Natural killer cell (primary cell): ENCODE measurements at regions of chr3 and their contacts with region 1.

Region 1: GRCh38 chr3:161310649-161311423 is 60.5 kb downstream of the SPTSSB start:
- DNase-seq: peak; percentile 54 to 81
- ATAC-seq: peak; percentile 75 to 84 (median 80)
- H3K4me3 ChIP-seq: no peak overlapping the region
- H3K4me3 Mint-ChIP-seq: peak overlapping the region; percentile 84
- H3K27ac ChIP-seq: peak overlapping the region; percentile 54
- H3K27ac Mint-ChIP-seq: peak overlapping the region; percentile 64 to 78
- H3K4me1 ChIP-seq: peaks cover 44% of the 10 kb centered on the region
- H3K4me1 Mint-ChIP-seq: peaks cover 50 to 51% of the 10 kb centered on the region in 2 donors
- H3K27me3 ChIP-seq: peaks cover 2% of the 10 kb centered on the region
- H3K27me3 Mint-ChIP-seq: peaks cover 34 to 41% of the 10 kb centered on the region in 2 donors
- CTCF ChIP-seq: no peak

Region 2: DNA sequence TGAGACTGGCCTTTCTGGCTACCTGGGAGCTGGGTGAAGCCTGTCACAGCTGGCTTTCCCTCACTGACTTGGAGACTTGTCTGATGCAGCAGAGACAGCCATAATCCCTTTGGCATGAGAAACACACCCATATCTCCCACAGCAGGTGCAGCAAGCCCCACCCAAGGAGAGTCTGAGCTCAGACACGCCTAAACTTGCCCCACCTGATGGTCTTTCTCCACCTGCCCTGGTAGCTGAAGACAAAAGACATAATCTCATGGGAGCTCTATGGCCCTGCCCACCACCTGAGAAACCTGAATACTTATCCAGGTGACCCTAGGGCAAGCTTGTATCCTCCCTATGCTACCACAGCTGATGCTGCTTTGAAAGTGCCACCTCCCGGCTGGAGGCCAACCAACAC is 34.9 kb before region 1 on chr3:
- intact Hi-C with region 1: no loop called
- DNase-seq: no peak
- ATAC-seq: no peak
- H3K4me3 ChIP-seq: no peak overlapping the region
- H3K4me3 Mint-ChIP-seq: no peak overlapping the region
- H3K27ac ChIP-seq: no peak overlapping the region
- H3K27ac Mint-ChIP-seq: no peak overlapping the region
- H3K4me1 ChIP-seq: peaks cover 7% of the 10 kb centered on the region
- H3K4me1 Mint-ChIP-seq: no peaks in the 10 kb centered on the region
- H3K27me3 ChIP-seq: no peaks in the 10 kb centered on the region
- H3K27me3 Mint-ChIP-seq: peaks cover 0 to 3% of the 10 kb centered on the region in 2 donors
- CTCF ChIP-seq: no peak

Region 3: GRCh38 chr3:161371430-161372326 is 60.8 kb after region 1 on chr3 and contains the start of gene SPTSSB:
- intact Hi-C with region 1: loop called (anchors 5 kb)
- DNase-seq: peak; percentile 24 to 65
- ATAC-seq: peak; percentile 59 to 73 (median 61)
- H3K4me3 ChIP-seq: peak within 1 kb of the TSS; percentile 50
- H3K4me3 Mint-ChIP-seq: peak within 1 kb of the TSS; percentile 90
- H3K27ac ChIP-seq: peak within 1 kb of the TSS; percentile 44
- H3K27ac Mint-ChIP-seq: peak within 1 kb of the TSS in 1 of 2 donors; percentile 76
- H3K4me1 ChIP-seq: peaks cover 22% of the 10 kb centered on the region
- H3K4me1 Mint-ChIP-seq: peaks cover 16 to 24% of the 10 kb centered on the region in 2 donors
- H3K27me3 ChIP-seq: peaks cover 15% of the 10 kb centered on the region
- H3K27me3 Mint-ChIP-seq: peaks cover 56 to 67% of the 10 kb centered on the region in 2 donors
- CTCF ChIP-seq: no peak
- total RNA-seq, gene SPTSSB: 7.3 to 14.1 (median 11.1) TPM

Region 4: GRCh38 chr3:161393803-161394202 is 83.0 kb after region 1 on chr3:
- intact Hi-C with region 1: loop called (anchors 2 kb)
- DNase-seq: peak in 1 of 2 donors; percentile 11
- ATAC-seq: peak in 2 of 3 donors; percentile 62 to 65
- H3K4me3 ChIP-seq: no peak overlapping the region
- H3K4me3 Mint-ChIP-seq: peak overlapping the region; percentile 33
- H3K27ac ChIP-seq: peak overlapping the region; percentile 57
- H3K27ac Mint-ChIP-seq: peak overlapping the region in 1 of 2 donors; percentile 14
- H3K4me1 ChIP-seq: peaks cover 23% of the 10 kb centered on the region
- H3K4me1 Mint-ChIP-seq: peaks cover 28 to 30% of the 10 kb centered on the region in 2 donors
- H3K27me3 ChIP-seq: peaks cover 14% of the 10 kb centered on the region
- H3K27me3 Mint-ChIP-seq: peaks cover 54 to 81% of the 10 kb centered on the region in 2 donors
- CTCF ChIP-seq: no peak

Region 5: DNA sequence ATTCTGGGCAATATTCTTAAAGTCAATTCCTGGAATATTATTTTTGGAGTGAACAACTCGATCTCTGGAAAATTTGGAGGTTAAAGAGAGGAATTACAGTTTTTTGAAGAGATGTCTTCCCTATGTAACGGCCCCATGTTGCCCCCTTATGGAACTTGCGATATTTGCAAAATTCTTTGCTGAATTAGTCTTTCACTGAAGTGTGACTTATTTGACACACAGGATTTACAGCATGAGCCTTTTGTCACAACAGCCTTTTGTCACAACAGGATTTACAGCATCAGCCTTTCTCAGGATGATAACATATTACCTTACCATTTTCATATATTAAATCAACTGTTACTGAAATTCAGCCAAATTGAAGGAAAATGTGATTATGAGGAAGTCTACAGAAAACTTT is 98.2 kb after region 1 on chr3:
- intact Hi-C with region 1: loop called (anchors 5 kb)
- DNase-seq: peak in 1 of 2 donors; percentile 70
- ATAC-seq: peak in 2 of 3 donors; percentile 61 to 65
- H3K4me3 ChIP-seq: no peak overlapping the region
- H3K4me3 Mint-ChIP-seq: no peak overlapping the region
- H3K27ac ChIP-seq: no peak overlapping the region
- H3K27ac Mint-ChIP-seq: no peak overlapping the region
- H3K4me1 ChIP-seq: peaks cover 17% of the 10 kb centered on the region
- H3K4me1 Mint-ChIP-seq: peaks cover 16 to 18% of the 10 kb centered on the region in 2 donors
- H3K27me3 ChIP-seq: no peaks in the 10 kb centered on the region
- H3K27me3 Mint-ChIP-seq: peaks cover 23 to 54% of the 10 kb centered on the region in 2 donors
- CTCF ChIP-seq: peak; percentile 60